Activated B cell treated with CpG ODN at 0.5 μM for 24 hours (primary cell): ENCODE measurements at regions of chr19 and their contacts with region 1.

Region 1: DNA sequence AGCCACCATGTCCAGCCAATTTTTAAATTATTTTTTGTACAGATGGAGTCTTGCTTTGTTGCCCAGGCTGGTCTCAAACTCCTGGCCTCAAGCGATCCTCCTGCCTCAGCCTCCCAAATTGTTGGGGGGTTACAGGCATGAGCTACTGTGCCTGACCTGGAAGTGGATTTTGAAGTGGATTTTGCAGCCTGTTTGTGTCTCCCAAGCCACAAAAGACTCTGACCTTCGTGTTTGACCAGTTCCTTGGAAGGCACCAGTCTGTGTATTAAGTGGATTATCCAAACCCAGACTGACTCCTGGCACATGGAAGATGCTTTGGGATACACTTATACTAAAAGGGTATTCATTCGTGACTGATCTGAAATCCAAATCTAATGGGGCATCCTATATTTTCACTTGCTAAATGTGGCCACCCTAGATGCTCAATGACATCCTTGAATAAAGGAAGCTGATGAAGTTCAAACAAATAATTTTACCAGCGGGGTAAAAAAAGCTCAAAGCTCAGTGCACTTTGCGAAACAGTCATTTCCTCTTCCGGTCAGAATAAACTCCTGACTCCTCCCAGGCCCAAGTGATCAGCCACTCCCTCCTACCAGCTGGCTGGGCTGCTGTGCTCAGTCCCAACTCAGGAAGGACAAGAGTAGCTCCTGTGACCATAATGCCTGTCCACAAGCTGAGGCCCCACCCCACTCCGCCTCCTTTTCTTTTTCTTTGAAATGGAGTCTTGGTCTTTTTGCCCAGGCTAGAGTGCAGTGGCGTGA is 32.6 kb upstream of the GATAD2A start:
- DNase-seq: no peak
- ATAC-seq: peak; percentile 98
- H3K4me3 Mint-ChIP-seq: peak overlapping the region; percentile 69
- H3K27ac Mint-ChIP-seq: peak overlapping the region; percentile 94
- H3K4me1 Mint-ChIP-seq: peaks cover 12% of the 10 kb centered on the region
- H3K27me3 Mint-ChIP-seq: no peaks in the 10 kb centered on the region
- CTCF ChIP-seq: no peak

Region 2: GRCh38 chr19:19320362-19321142 is 52.3 kb before region 1 on chr19 and contains the starts of genes MAU2 and SUGP1:
- CTCF ChIA-PET with region 1: no interaction called
- POLR2A ChIA-PET with region 1: no interaction called
- intact Hi-C with region 1: no loop called
- DNase-seq: peak; percentile 82
- ATAC-seq: peak; percentile 92
- H3K4me3 Mint-ChIP-seq: peak within 1 kb of the TSS; percentile 98
- H3K27ac Mint-ChIP-seq: peak within 1 kb of the TSS; percentile 100
- H3K4me1 Mint-ChIP-seq: peaks cover 42% of the 10 kb centered on the region
- H3K27me3 Mint-ChIP-seq: no peaks in the 10 kb centered on the region
- CTCF ChIP-seq: no peak
- total RNA-seq, gene MAU2: 107 and 126 TPM in 2 replicates
- total RNA-seq, gene SUGP1: 68.6 and 73.0 TPM in 2 replicates

Region 3: GRCh38 chr19:19385108-19385899 is 12.5 kb after region 1 on chr19:
- CTCF ChIA-PET with region 1: interaction called, 4 read pairs
- POLR2A ChIA-PET with region 1: interaction called, 17 read pairs
- intact Hi-C with region 1: loop called (anchors 1 kb)
- DNase-seq: peak; percentile 98
- ATAC-seq: peak; percentile 89
- H3K4me3 Mint-ChIP-seq: peak overlapping the region; percentile 87
- H3K27ac Mint-ChIP-seq: peak overlapping the region; percentile 83
- H3K4me1 Mint-ChIP-seq: peaks cover 43% of the 10 kb centered on the region
- H3K27me3 Mint-ChIP-seq: no peaks in the 10 kb centered on the region
- CTCF ChIP-seq: no peak